ENCODE measurements at regions of chr15 and their contacts with region 1.

Region 1: GRCh38 chr15:63341898-63342297 is 39.7 kb downstream of the CA12 start:
- DNase-seq: no peak
- ATAC-seq: no peak
- H3K4me3 Mint-ChIP-seq: no peak overlapping the region
- H3K27ac Mint-ChIP-seq: no peak overlapping the region
- H3K4me1 Mint-ChIP-seq: peaks cover 24% of the 10 kb centered on the region
- H3K27me3 Mint-ChIP-seq: no peaks in the 10 kb centered on the region
- CTCF ChIP-seq: no peak

Region 2: GRCh38 chr15:62426387-62426956 is 915.4 kb before region 1 on chr15:
- CTCF ChIA-PET with region 1: no interaction called
- POLR2A ChIA-PET with region 1: no interaction called
- intact Hi-C with region 1: no loop called
- DNase-seq: no peak
- ATAC-seq: no peak
- H3K4me3 Mint-ChIP-seq: no peak overlapping the region
- H3K27ac Mint-ChIP-seq: no peak overlapping the region
- H3K4me1 Mint-ChIP-seq: no peaks in the 10 kb centered on the region
- H3K27me3 Mint-ChIP-seq: no peaks in the 10 kb centered on the region
- CTCF ChIP-seq: no peak

Region 3: DNA sequence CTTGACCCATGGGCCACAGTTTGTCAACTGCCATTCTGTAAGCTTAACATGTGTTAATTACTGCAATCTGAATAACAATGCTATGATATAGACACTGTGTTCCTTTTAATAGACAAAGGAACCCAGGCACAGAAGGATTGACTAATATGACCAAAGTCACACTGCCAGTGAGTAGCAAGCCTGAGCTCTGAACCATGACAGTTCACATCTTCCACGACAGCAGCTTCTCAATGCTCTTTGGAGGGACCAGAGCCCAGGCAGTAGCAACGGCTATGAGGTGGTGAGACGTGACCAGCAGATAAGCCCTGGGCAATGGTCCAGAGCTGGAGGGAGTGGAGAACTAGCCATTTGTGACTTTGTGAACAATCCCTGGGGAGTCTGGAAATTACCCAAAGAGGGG is 20.3 kb after region 1 on chr15:
- CTCF ChIA-PET with region 1: no interaction called
- POLR2A ChIA-PET with region 1: interaction called, 3 read pairs
- intact Hi-C with region 1: loop called (anchors 2 kb)
- DNase-seq: no peak
- ATAC-seq: peak; percentile 65
- H3K4me3 Mint-ChIP-seq: peak overlapping the region; percentile 44
- H3K27ac Mint-ChIP-seq: peak overlapping the region; percentile 76
- H3K4me1 Mint-ChIP-seq: peaks cover 21% of the 10 kb centered on the region
- H3K27me3 Mint-ChIP-seq: peaks cover 1% of the 10 kb centered on the region
- CTCF ChIP-seq: no peak

Measured in activated B cell treated with CpG ODN at 0.5 μM for 24 hours (primary cell).